GM18951 (cell line): ENCODE measurements at regions of chr3 and their contacts with region 1.

Region 1: GRCh38 chr3:11236595-11237461 is 35.4 kb upstream of the ATG7 start:
- POLR2A ChIP-seq: no peak

Region 2: DNA sequence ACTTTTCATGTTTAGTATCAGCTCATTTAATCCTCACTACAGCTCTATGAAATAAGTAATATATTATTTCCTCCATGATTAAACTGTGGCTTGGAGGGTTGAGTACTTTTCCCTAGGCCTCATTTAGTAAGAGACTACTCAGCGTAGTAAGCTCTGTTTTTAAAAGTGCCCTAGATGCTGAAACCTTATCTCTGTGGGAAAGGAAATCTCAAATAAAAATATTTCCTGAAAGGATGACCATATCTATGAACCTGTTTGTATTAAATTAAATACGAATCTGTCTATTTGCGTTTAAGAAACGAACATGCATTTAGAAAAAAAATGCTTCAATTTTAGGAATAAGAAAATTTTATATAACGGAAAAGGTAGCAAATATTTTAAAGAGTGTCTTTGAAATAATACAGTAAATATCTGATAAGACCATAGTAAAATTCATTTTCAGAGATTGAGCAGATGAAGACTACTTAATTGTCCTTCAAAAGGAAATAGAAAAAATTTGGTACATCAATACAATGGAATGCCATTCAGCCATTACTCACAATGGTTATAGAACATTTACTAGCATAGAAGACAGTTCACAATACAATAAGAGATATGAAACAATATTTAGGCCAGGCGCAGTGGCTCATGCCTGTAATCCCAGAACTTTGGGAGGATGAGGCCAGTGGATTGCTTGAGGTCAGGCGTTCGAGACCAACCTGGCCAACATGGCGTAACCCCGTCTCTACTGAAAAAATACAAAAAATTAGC is 91.5 kb after region 1 on chr3:
- in situ Hi-C with region 1: loop called (anchors 5 kb)
- POLR2A ChIP-seq: no peak